GM10248 (cell line): ENCODE measurements at regions of chr13 and their contacts with region 1.

Region 1: GRCh38 chr13:21557995-21558394 is 46.0 kb downstream of the MICU2 start:
- DNase-seq: no peak
- CTCF ChIP-seq: peak; percentile 10

Region 2: DNA sequence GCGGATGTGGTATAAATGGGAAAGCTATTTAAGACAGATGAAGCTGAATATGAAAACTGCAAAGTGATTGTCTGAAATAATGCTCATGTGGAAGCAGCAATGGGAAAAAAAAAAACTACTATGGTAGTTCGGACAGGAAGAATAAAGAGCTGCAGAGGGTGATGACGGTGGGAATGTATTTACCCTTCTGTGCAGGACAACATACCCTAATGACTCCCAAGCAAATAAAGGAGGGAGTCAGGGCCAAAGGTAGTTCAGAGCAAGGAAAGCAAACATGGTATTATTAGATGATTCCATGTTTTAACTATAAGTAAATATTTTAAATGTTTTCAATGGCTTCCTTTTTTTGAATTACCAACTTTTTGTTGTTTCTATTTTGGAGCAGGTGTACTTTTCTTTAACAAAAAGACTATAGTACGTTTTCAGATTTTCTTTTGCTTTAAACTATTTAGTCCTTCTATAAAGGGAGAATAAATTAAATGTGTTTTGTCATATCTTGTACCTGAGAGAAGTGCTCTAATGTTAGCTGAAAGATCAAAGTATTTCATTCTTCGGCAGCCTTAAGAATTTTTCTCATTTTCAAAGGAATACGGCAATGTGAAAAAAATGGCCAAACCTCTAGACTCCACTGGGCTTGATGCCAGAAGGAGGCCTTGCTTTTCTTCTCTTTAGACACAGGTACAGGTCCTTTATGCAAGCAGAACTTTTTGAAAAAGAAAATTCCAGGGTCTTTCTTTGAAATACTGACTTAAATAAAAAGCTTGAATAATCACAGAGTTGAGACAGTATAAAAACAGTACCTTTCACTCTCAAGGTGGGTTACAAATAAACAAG is 31.1 kb before region 1 on chr13:
- CTCF ChIA-PET with region 1: no interaction called
- POLR2A ChIA-PET with region 1: no interaction called
- DNase-seq: no peak
- CTCF ChIP-seq: no peak

Region 3: GRCh38 chr13:21583478-21583877 is 25.5 kb after region 1 on chr13:
- CTCF ChIA-PET with region 1: interaction called, 11 read pairs
- POLR2A ChIA-PET with region 1: no interaction called
- DNase-seq: no peak
- CTCF ChIP-seq: no peak